ENCODE measurements at regions of chr12 and their contacts with region 1.

Region 1: DNA sequence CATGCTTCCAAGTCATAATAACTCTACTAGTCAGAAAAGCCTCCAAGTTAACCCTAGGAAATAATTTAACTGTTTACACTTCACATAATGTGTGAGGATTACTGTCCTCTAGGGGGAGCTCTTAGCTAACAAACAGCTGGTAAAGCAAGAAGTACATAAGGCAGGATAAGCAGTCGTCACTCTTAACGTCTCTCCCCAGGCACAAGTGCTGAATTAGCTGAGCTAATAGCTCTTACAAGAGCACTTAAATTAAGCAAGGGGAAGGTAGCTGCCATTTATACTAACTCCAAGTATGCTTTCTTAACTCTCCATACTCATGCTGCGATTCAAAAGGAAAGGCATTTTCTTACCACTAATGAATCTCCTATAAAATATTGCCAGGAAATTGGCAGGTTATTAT is 79.3 kb upstream of the TSPAN11 start:
- DNase-seq: peak; percentile 86

Region 2: GRCh38 chr12:30985814-30986452 is 138.7 kb after region 1 on chr12:
- in situ Hi-C with region 1: loop called (anchors 10 kb)
- DNase-seq: peak; percentile 74

Region 3: DNA sequence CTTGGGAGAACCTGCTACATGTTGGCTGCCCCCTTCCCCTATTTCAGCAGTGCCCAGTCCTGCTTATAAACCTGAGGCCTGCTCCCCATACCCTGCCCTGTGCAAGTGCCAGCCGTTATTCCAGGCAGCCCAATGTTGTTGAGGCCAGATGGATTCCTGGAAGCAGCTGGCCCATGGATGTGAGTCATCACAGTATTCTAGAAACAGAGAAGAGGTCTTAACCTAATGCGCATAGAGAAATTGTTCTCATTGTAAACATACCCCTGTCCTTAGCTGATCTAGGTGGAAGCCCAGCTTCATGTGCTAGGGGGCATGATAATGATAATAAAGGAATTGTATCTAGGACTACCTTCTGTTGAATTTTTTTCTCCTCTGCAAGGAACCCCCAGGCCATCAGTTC is 149.0 kb after region 1 on chr12:
- in situ Hi-C with region 1: no loop called
- DNase-seq: no peak

Measured in SK-MEL-5 (cell line).